ENCODE measurements at regions of chr10 and their contacts with region 1.

Region 1: DNA sequence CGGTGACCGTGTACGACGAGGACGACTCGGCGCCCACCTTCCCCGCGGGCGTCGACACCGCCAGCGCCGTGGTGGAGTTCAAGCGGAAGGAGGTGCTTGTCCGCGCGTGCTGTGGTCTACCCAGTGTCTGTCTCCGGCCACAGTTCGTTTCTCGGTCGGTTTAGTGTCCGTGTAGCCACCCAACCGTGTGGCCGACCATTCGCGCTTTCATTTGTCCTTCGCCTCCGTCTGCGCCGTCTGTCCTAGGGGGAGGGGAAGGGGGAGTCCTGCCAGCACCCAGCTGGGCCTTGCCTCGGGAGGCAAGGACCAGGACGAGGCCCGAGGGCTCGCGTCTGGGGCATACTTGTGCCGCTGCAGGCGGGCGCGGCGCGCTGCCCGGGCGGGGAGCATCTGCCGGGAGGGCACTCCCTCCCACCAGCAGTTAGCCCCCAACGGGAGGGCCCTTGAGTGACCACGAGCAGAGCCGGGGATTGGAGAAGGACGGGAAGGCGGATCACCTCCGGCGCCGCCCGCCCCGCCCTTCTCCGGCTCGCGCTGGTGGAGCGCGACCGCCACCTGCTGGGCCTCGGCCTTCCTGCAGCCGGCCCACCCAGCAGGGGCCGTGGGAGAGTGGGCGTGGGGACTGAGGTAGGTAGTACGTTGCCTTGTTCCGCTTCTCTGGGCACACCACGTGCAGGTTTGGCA is 28.4 kb downstream of the RET start:
- DNase-seq: peak; percentile 41
- ATAC-seq: peak; percentile 96
- H3K4me3 ChIP-seq: peak overlapping the region; percentile 29 to 50; a peak in 3 of 4 replicates
- H3K27ac ChIP-seq: peak overlapping the region; percentile 46; the same call in 1 of the 2 replicates
- H3K4me1 ChIP-seq: peaks cover 0 to 10% of the 10 kb centered on the region in 2 experiments; a peak in 2 of 4 replicates
- H3K27me3 ChIP-seq: no peaks in the 10 kb centered on the region
- CTCF ChIP-seq: peak; percentile 88 to 98 (median 96)
- POLR2A ChIP-seq: no peak
- RAD21 ChIP-seq: peak; percentile 97

Region 2: GRCh38 chr10:42866115-42866995 is 238.9 kb before region 1 on chr10:
- CTCF ChIA-PET with region 1: interaction called, 4 read pairs
- POLR2A ChIA-PET with region 1: no interaction called
- RAD21 ChIA-PET with region 1: no interaction called
- intact Hi-C with region 1: loop called (anchors 1 kb)
- DNase-seq: peak; percentile 47
- ATAC-seq: peak; percentile 100
- H3K4me3 ChIP-seq: no peak overlapping the region
- H3K27ac ChIP-seq: no peak overlapping the region
- H3K4me1 ChIP-seq: peaks cover 0 to 12% of the 10 kb centered on the region in 2 experiments; a peak in 3 of 4 replicates
- H3K27me3 ChIP-seq: peaks cover under 1% of the 10 kb centered on the region
- CTCF ChIP-seq: peak; percentile 66 to 81 (median 72)
- POLR2A ChIP-seq: no peak
- RAD21 ChIP-seq: peak; percentile 91

Region 3: GRCh38 chr10:43078987-43079275 is 26.3 kb before region 1 on chr10:
- CTCF ChIA-PET with region 1: no interaction called
- POLR2A ChIA-PET with region 1: no interaction called
- RAD21 ChIA-PET with region 1: no interaction called
- intact Hi-C with region 1: loop called (anchors 2 kb)
- DNase-seq: no peak
- ATAC-seq: peak; percentile 42
- H3K4me3 ChIP-seq: no peak overlapping the region
- H3K27ac ChIP-seq: no peak overlapping the region
- H3K4me1 ChIP-seq: peaks cover 12 to 19% of the 10 kb centered on the region in 2 experiments; a peak in 2 of 4 replicates
- H3K27me3 ChIP-seq: no peaks in the 10 kb centered on the region
- CTCF ChIP-seq: peak; percentile 57 to 84 (median 80); a peak in 5 of 6 replicates
- POLR2A ChIP-seq: no peak
- RAD21 ChIP-seq: peak; percentile 74

Region 4: DNA sequence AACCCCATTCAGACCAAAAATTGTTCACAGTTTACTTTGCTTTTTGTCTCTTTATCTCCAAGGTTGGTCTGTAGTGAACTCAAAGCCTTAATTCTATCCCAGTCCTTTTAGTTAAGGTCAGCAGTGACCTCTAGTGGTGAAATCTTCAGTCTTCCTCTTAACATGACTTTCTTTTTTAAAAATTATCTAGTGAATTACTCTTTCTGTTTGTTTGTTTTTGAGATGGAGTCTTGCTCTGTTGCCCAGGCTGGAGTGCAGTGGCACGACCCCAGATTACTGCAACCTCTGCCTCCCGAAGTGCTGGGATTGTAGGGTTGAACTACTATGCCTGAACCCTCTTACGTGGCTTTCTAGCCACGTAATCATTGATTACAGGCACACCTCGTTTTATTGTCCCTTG is 356.7 kb after region 1 on chr10:
- CTCF ChIA-PET with region 1: no interaction called
- POLR2A ChIA-PET with region 1: no interaction called
- RAD21 ChIA-PET with region 1: interaction called in 1 of 2 experiments, 3 read pairs
- intact Hi-C with region 1: loop called (anchors 1 kb)
- DNase-seq: peak; percentile 80
- ATAC-seq: peak; percentile 85
- H3K4me3 ChIP-seq: no peak overlapping the region
- H3K27ac ChIP-seq: no peak overlapping the region
- H3K4me1 ChIP-seq: no peaks in the 10 kb centered on the region; a peak in 1 of 4 replicates
- H3K27me3 ChIP-seq: no peaks in the 10 kb centered on the region
- CTCF ChIP-seq: peak; percentile 62 to 78 (median 76)
- POLR2A ChIP-seq: no peak
- RAD21 ChIP-seq: peak; percentile 84

Measured in HCT116 (cell line).